ENCODE measurements at regions of chr2 and their contacts with region 1.

Region 1: DNA sequence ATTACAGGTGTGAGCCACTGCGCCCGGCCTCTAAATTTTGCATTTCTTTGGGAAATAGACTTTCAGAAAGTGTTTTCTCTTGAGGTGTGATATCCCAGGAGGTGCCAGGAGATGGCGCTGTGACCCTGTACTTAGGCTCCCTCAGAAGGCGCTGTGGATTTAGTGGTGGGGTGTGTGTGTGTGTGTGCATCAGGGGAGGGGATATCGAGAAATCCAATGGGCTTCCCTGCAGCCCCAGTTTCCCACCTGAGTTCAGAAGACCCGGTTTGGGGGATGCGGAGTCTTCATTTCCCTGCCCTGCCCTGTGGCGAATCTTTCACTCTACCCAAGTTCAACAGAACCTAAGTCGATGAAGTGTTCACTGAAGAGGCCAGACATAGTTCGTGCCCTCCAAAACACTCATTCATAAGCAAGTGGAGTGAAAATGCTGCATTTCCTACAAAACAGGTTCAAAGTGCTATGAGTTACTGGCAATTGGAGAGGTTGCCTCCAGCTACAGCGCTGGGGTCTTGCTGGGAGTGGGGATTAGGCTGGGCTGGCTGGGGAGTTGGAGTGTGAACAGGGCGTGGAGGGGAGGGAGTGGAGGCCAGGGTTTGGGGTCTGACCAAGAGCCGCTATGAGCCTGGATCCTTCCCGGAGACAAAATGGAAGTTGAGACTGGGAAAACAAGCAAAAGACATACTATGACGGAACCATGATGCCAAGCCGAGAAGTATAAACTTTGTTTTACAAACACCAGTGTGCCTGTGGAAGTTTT is 6.5 kb upstream of the WNT6 start:
- DNase-seq: peak; percentile 36 to 80 (median 70)
- ATAC-seq: peak; percentile 90
- H3K4me3 ChIP-seq: no peak overlapping the region
- H3K4me3 Mint-ChIP-seq: no peak overlapping the region
- H3K27ac ChIP-seq: no peak overlapping the region
- H3K27ac Mint-ChIP-seq: no peak overlapping the region
- H3K4me1 ChIP-seq: no peaks in the 10 kb centered on the region
- H3K4me1 Mint-ChIP-seq: peaks cover 3% of the 10 kb centered on the region
- H3K27me3 ChIP-seq: peaks cover 15 to 22% of the 10 kb centered on the region in 2 experiments
- H3K27me3 Mint-ChIP-seq: peaks cover 66% of the 10 kb centered on the region
- CTCF ChIP-seq: peak; percentile 80

Region 2: GRCh38 chr2:218876562-218877219 is 23.6 kb after region 1 on chr2:
- CTCF ChIA-PET with region 1: interaction called, 10 read pairs
- POLR2A ChIA-PET with region 1: no interaction called
- intact Hi-C with region 1: loop called in 1 of 2 experiments (anchors 1 kb)
- DNase-seq: peak; percentile 61 to 86 (median 78)
- ATAC-seq: no peak
- H3K4me3 ChIP-seq: no peak overlapping the region
- H3K4me3 Mint-ChIP-seq: no peak overlapping the region
- H3K27ac ChIP-seq: no peak overlapping the region
- H3K27ac Mint-ChIP-seq: no peak overlapping the region
- H3K4me1 ChIP-seq: peaks cover 59% of the 10 kb centered on the region
- H3K4me1 Mint-ChIP-seq: peaks cover 41% of the 10 kb centered on the region
- H3K27me3 ChIP-seq: peaks cover 16 to 30% of the 10 kb centered on the region in 2 experiments
- H3K27me3 Mint-ChIP-seq: peaks cover 34% of the 10 kb centered on the region
- CTCF ChIP-seq: peak; percentile 99

Region 3: GRCh38 chr2:218979846-218980734 is 127.0 kb after region 1 on chr2:
- CTCF ChIA-PET with region 1: interaction called, 3 read pairs
- POLR2A ChIA-PET with region 1: no interaction called
- intact Hi-C with region 1: loop called in 1 of 2 experiments (anchors 5 kb)
- DNase-seq: peak; percentile 72 to 88 (median 83)
- ATAC-seq: peak; percentile 89
- H3K4me3 ChIP-seq: peak overlapping the region; percentile 3 to 18
- H3K4me3 Mint-ChIP-seq: peak overlapping the region; percentile 76
- H3K27ac ChIP-seq: no peak overlapping the region
- H3K27ac Mint-ChIP-seq: no peak overlapping the region
- H3K4me1 ChIP-seq: peaks cover 31% of the 10 kb centered on the region
- H3K4me1 Mint-ChIP-seq: peaks cover 34% of the 10 kb centered on the region
- H3K27me3 ChIP-seq: peaks cover 49% of the 10 kb centered on the region in 2 experiments
- H3K27me3 Mint-ChIP-seq: peaks cover 64% of the 10 kb centered on the region
- CTCF ChIP-seq: peak; percentile 94

Region 4: DNA sequence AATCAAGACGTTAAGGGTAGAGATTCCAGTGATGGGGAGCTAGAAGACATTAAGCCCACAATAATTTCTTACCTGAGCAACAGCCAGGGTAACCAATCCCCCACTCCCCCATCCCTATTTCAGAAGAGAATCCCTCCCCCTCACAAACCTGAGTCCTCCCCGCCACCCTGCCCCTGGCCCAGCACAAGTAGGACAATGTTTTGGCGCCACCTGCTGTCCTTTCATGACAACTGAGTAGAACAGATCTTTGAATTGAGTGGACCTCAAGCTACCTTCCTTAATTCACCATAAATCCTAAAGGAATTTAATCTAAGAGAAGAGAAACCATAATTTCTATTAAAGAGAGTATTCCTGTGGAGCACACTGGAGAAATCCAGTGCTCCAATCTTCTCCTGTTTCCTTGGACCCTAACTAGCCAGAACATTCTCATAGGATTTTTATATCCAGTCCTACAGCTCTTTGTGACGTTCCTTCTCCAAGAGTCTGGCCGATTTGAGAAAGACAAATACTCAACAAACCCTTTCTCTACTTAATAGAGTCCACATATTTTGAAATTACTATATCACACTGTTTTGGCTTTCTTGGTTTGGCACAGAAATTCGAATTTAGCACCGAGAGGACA is 266.4 kb after region 1 on chr2:
- CTCF ChIA-PET with region 1: interaction called, 4 read pairs
- POLR2A ChIA-PET with region 1: no interaction called
- intact Hi-C with region 1: loop called in 1 of 2 experiments (anchors 10 kb)
- DNase-seq: peak in 8 of 9 experiments; percentile 34 to 70 (median 63)
- ATAC-seq: no peak
- H3K4me3 ChIP-seq: no peak overlapping the region
- H3K4me3 Mint-ChIP-seq: no peak overlapping the region
- H3K27ac ChIP-seq: no peak overlapping the region
- H3K27ac Mint-ChIP-seq: no peak overlapping the region
- H3K4me1 ChIP-seq: peaks cover 6% of the 10 kb centered on the region
- H3K4me1 Mint-ChIP-seq: peaks cover 8% of the 10 kb centered on the region
- H3K27me3 ChIP-seq: no peaks in the 10 kb centered on the region
- H3K27me3 Mint-ChIP-seq: no peaks in the 10 kb centered on the region
- CTCF ChIP-seq: peak; percentile 80